CD8-positive, alpha-beta T cell (primary cell): ENCODE measurements at regions of chr1 and their contacts with region 1.

Region 1: DNA sequence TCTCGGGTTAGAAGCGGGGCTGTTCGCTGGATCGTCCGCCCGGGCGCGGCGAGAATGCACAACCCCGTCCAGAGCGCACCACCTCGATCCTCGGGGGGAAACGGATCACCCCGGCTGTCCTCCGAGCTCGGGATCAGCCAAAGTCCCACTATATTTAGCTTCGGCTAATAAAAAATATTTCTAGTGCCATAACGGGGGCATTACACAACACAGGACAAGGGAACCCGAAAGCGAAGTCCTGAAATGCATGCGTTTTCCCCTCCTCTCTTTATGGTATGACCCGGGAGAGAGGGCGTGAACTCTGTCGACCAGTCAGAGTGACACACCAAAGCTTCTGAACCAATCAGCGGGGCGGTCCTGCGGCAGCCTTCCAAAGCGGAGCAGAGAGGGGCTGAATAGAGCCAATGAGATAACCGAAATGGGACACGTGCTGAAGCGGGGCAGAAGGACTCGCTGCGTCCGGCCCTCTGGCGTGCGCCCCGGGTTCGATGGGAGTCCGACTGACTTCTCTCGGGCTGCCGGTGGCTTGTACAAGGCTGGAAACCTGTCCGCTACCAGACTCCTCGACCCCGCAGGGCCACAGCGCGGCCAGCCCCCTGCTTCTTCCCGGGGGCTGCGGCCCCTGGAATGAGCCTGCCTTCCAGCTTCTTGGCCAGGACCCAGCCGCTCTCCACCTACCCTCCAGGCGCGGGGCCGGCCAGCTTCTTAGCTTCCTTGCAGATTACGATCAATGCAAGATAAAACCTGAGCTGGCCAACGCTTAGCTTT is at the start of gene ALDH4A1:
- DNase-seq: peak; percentile 85 to 96 (median 93)
- ATAC-seq: peak; percentile 96
- H3K4me3 ChIP-seq: peak within 1 kb of the TSS; percentile 66 to 74
- H3K4me3 Mint-ChIP-seq: peak within 1 kb of the TSS; percentile 91
- H3K27ac ChIP-seq: peak within 1 kb of the TSS; percentile 55 to 89
- H3K27ac Mint-ChIP-seq: peak within 1 kb of the TSS; percentile 96
- H3K4me1 ChIP-seq: peaks cover 32% of the 10 kb centered on the region
- H3K4me1 Mint-ChIP-seq: peaks cover 29% of the 10 kb centered on the region
- H3K27me3 ChIP-seq: no peaks in the 10 kb centered on the region
- H3K27me3 Mint-ChIP-seq: no peaks in the 10 kb centered on the region
- CTCF ChIP-seq: no peak
- total RNA-seq, gene ALDH4A1: 1.0 to 1.3 TPM

Region 2: GRCh38 chr1:18890711-18891425 is 11.8 kb before region 1 on chr1:
- CTCF ChIA-PET with region 1: interaction called, 116 read pairs
- POLR2A ChIA-PET with region 1: no interaction called
- intact Hi-C with region 1: no loop called
- DNase-seq: no peak
- ATAC-seq: no peak
- H3K4me3 ChIP-seq: no peak overlapping the region
- H3K4me3 Mint-ChIP-seq: no peak overlapping the region
- H3K27ac ChIP-seq: no peak overlapping the region
- H3K27ac Mint-ChIP-seq: no peak overlapping the region
- H3K4me1 ChIP-seq: no peaks in the 10 kb centered on the region
- H3K4me1 Mint-ChIP-seq: no peaks in the 10 kb centered on the region
- H3K27me3 ChIP-seq: no peaks in the 10 kb centered on the region
- H3K27me3 Mint-ChIP-seq: no peaks in the 10 kb centered on the region
- CTCF ChIP-seq: no peak

Region 3: GRCh38 chr1:18926315-18927081 is 23.8 kb after region 1 on chr1:
- CTCF ChIA-PET with region 1: interaction called, 15 read pairs
- POLR2A ChIA-PET with region 1: interaction called, 6 read pairs
- intact Hi-C with region 1: loop called in 1 of 2 experiments (anchors 1 kb)
- DNase-seq: peak; percentile 59 to 93 (median 84)
- ATAC-seq: peak; percentile 83
- H3K4me3 ChIP-seq: peak overlapping the region; percentile 52 to 63
- H3K4me3 Mint-ChIP-seq: peak overlapping the region; percentile 75
- H3K27ac ChIP-seq: peak overlapping the region; percentile 64 to 82
- H3K27ac Mint-ChIP-seq: peak overlapping the region; percentile 96
- H3K4me1 ChIP-seq: peaks cover 88% of the 10 kb centered on the region
- H3K4me1 Mint-ChIP-seq: peaks cover 85% of the 10 kb centered on the region
- H3K27me3 ChIP-seq: no peaks in the 10 kb centered on the region
- H3K27me3 Mint-ChIP-seq: no peaks in the 10 kb centered on the region
- CTCF ChIP-seq: no peak

Region 4: GRCh38 chr1:18936814-18937481 is 34.2 kb after region 1 on chr1:
- CTCF ChIA-PET with region 1: no interaction called
- POLR2A ChIA-PET with region 1: no interaction called
- intact Hi-C with region 1: no loop called
- DNase-seq: no peak
- ATAC-seq: no peak
- H3K4me3 ChIP-seq: no peak overlapping the region
- H3K4me3 Mint-ChIP-seq: no peak overlapping the region
- H3K27ac ChIP-seq: no peak overlapping the region
- H3K27ac Mint-ChIP-seq: no peak overlapping the region
- H3K4me1 ChIP-seq: peaks cover 57% of the 10 kb centered on the region
- H3K4me1 Mint-ChIP-seq: peaks cover 74% of the 10 kb centered on the region
- H3K27me3 ChIP-seq: no peaks in the 10 kb centered on the region
- H3K27me3 Mint-ChIP-seq: no peaks in the 10 kb centered on the region
- CTCF ChIP-seq: no peak

Region 5: DNA sequence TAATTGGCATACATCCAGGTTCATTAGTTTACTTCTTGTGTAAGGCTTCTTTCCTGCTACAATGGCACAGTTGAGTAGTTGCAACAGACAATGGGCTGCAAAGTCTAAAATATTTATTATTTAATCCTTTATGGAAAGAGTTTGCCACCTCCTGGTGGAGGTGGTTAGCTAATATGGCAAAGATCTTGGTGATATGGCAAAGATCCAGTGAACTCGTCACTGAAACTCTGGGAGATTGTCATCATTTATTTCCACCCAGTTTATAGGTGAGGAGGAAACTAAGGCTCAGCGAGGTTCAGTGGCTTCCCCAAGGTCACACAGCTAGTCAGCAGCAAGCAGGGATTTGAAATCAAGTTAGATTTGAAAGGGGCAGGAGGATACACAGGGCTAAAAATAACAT is 69.8 kb after region 1 on chr1:
- CTCF ChIA-PET with region 1: interaction called, 425 read pairs
- POLR2A ChIA-PET with region 1: interaction called, 5 read pairs
- intact Hi-C with region 1: loop called (anchors 1 kb)
- DNase-seq: peak in 4 of 9 experiments; percentile 27 to 73 (median 52)
- ATAC-seq: peak; percentile 61
- H3K4me3 ChIP-seq: no peak overlapping the region
- H3K4me3 Mint-ChIP-seq: no peak overlapping the region
- H3K27ac ChIP-seq: no peak overlapping the region
- H3K27ac Mint-ChIP-seq: no peak overlapping the region
- H3K4me1 ChIP-seq: peaks cover 3% of the 10 kb centered on the region
- H3K4me1 Mint-ChIP-seq: peaks cover 4% of the 10 kb centered on the region
- H3K27me3 ChIP-seq: no peaks in the 10 kb centered on the region
- H3K27me3 Mint-ChIP-seq: peaks cover 7% of the 10 kb centered on the region
- CTCF ChIP-seq: peak; percentile 59

Region 6: GRCh38 chr1:19096036-19096833 is 193.5 kb after region 1 on chr1:
- CTCF ChIA-PET with region 1: interaction called, 20 read pairs
- POLR2A ChIA-PET with region 1: interaction called, 3 read pairs
- intact Hi-C with region 1: loop called (anchors 1 to 5 kb)
- DNase-seq: peak in 3 of 9 experiments; percentile 8 to 36 (median 30)
- ATAC-seq: no peak
- H3K4me3 ChIP-seq: no peak overlapping the region
- H3K4me3 Mint-ChIP-seq: no peak overlapping the region
- H3K27ac ChIP-seq: no peak overlapping the region
- H3K27ac Mint-ChIP-seq: no peak overlapping the region
- H3K4me1 ChIP-seq: no peaks in the 10 kb centered on the region
- H3K4me1 Mint-ChIP-seq: no peaks in the 10 kb centered on the region
- H3K27me3 ChIP-seq: no peaks in the 10 kb centered on the region
- H3K27me3 Mint-ChIP-seq: no peaks in the 10 kb centered on the region
- CTCF ChIP-seq: no peak

Region 7: DNA sequence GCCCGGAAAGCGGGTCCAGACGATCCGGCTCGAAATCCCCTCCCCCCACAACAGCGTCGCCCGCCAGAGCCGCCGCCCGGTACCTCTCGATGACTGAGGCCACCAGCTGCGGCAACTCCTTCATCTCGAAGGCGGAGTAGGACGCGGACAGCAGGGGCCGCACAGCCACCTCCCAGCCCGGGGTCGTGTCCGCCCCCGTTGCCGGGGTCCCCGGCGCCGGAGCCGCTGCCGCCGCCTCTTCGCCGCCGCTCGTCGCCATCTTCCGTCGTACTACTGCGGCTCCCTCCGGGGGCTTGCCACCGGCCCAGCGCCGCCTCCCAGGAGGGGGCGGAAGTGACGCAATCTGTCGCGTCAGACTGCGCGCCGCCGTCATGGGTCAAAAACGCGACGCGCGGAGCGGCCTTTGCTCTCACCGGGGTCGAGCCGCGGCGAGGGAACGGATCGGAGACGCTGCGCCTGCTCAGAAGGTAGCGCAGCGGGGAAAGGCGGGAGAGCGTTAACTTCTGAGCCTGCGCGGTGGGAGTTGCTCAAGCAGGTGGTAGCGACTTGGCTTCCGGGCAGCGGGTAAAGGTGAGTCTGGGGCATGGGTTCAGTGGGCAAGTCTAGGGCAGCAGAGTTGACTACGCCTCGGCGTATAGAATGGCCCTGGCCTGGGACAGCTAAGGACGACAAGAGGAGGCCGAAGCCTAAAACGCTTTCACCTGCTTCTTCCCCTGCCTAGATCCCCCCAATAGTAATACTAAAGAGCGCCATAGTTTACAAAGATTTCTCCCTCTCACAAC is 307.5 kb after region 1 on chr1 and contains the start of gene UBR4:
- CTCF ChIA-PET with region 1: no interaction called
- POLR2A ChIA-PET with region 1: no interaction called
- intact Hi-C with region 1: loop called in 1 of 2 experiments (anchors 1 kb)
- DNase-seq: peak; percentile 91 to 99 (median 97)
- ATAC-seq: peak; percentile 93
- H3K4me3 ChIP-seq: peak within 1 kb of the TSS; percentile 73 to 96
- H3K4me3 Mint-ChIP-seq: peak within 1 kb of the TSS; percentile 96
- H3K27ac ChIP-seq: peak within 1 kb of the TSS; percentile 86 to 96
- H3K27ac Mint-ChIP-seq: peak within 1 kb of the TSS; percentile 99
- H3K4me1 ChIP-seq: peaks cover 48% of the 10 kb centered on the region
- H3K4me1 Mint-ChIP-seq: peaks cover 76% of the 10 kb centered on the region
- H3K27me3 ChIP-seq: no peaks in the 10 kb centered on the region
- H3K27me3 Mint-ChIP-seq: no peaks in the 10 kb centered on the region
- CTCF ChIP-seq: no peak
- total RNA-seq, gene UBR4: 146 to 148 TPM